ENCODE measurements at regions of chr13 and their contacts with region 1.

Region 1: DNA sequence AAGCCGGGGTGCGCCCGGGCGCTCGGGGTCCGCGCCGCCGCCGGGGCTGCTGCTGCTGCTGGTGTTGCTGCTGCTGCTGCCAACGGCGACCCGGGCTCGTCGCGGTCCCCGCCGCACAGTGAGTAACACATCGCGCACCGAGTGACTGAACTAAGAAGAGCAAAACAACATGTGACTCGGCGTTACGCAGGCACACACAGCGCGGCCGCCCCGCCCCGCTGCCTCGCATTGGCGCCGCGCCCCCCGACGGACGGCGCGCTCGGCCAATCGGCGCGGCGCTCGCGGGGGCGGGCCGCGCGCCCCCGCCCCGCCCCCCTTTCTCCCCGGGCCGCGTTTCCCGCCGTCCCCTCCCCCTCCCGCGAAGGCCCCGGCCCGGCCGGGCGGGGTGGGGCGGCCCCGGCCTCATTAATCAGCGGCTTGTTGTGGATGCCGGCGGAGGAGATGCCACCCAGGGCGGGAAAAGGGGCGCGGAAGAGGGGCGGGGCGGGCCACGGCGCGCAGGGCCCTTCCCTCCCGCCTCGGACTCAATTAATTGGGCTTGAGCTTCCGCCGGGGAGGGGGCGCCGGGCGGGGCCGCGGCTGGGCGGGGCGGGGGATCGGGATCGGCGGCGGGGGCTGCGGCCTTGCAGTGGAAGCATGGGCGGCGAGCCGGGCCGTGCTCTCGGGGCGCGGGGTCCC is at the start of gene IRS2:
- DNase-seq: no peak
- ATAC-seq: peak; percentile 92
- H3K4me3 ChIP-seq: peak within 1 kb of the TSS; percentile 32; the same call in 1 of the 2 replicates
- H3K27ac ChIP-seq: no peak within 1 kb of the TSS
- H3K4me1 ChIP-seq: no peaks in the 10 kb centered on the region
- H3K27me3 ChIP-seq: peaks cover 1 to 3% of the 10 kb centered on the region in 2 experiments; a peak in 3 of 4 replicates
- CTCF ChIP-seq: no peak
- EP300 ChIP-seq: no peak
- POLR2A ChIP-seq: peak; percentile 80
- RAD21 ChIP-seq: no peak
- polyA plus RNA-seq, gene IRS2: 0.03 TPM in 1 of 2 experiments, not detected in the other

Region 2: GRCh38 chr13:110116072-110116487 is 329.5 kb after region 1 on chr13:
- CTCF ChIA-PET with region 1: no interaction called
- POLR2A ChIA-PET with region 1: no interaction called
- RAD21 ChIA-PET with region 1: no interaction called
- SMC1A ChIA-PET with region 1: no interaction called
- in situ Hi-C with region 1: no loop called
- intact Hi-C with region 1: loop called (anchors 10 kb)
- DNase-seq: no peak
- ATAC-seq: peak; percentile 85
- H3K4me3 ChIP-seq: no peak overlapping the region
- H3K27ac ChIP-seq: no peak overlapping the region
- H3K4me1 ChIP-seq: no peaks in the 10 kb centered on the region; the same call in 1 of the 2 replicates
- H3K27me3 ChIP-seq: peaks cover 0 to 2% of the 10 kb centered on the region in 2 experiments; a peak in 1 of 4 replicates
- CTCF ChIP-seq: peak; percentile 71 to 98 (median 88)
- EP300 ChIP-seq: no peak
- POLR2A ChIP-seq: no peak
- RAD21 ChIP-seq: peak; percentile 65

Measured in GM12878 (cell line).